IMR-90 (cell line): ENCODE measurements at regions of chr2 and their contacts with region 1.

Region 1: DNA sequence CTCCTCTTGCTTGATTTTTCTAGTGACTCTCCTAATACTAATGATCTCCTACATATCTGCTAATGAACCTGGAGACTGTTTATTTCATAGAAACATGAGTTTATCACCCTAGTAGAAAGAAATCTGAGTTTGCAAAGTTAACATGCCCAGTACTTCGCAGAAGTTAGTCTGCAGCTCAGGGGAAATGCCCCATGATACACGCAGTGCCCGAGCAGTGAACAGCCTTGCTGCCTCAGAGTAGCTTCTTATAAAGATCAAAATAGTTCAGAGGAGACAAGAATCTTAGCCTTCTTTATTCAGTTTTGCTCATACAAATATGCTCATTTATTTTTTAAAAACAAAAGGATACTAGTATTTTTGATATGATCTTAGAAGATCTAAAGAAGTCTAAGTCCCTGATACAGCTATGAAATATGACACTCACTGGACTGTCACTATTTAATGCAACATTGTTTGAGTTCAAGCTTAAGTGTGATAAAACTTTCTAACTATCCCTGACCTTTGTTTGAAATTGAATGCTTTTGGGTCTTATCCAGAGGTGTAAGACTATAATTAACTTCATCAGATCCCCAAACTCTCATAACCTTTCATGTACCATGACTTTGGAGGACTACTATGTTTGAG is 20.5 kb downstream of the FRZB start:
- DNase-seq: no peak
- ATAC-seq: peak; percentile 48; the same call in 1 of the 2 replicates
- H3K4me3 ChIP-seq: no peak overlapping the region
- H3K27ac ChIP-seq: no peak overlapping the region
- H3K4me1 ChIP-seq: no peaks in the 10 kb centered on the region
- H3K27me3 ChIP-seq: no peaks in the 10 kb centered on the region; the same call in 1 of the 2 replicates
- CTCF ChIP-seq: no peak
- POLR2A ChIP-seq: no peak
- RAD21 ChIP-seq: no peak

Region 2: GRCh38 chr2:182522405-182522896 is 323.5 kb before region 1 on chr2:
- CTCF ChIA-PET with region 1: no interaction called
- POLR2A ChIA-PET with region 1: no interaction called
- dilution Hi-C with region 1: no loop called
- in situ Hi-C with region 1: no loop called
- intact Hi-C with region 1: no loop called
- DNase-seq: no peak
- ATAC-seq: peak; percentile 63
- H3K4me3 ChIP-seq: no peak overlapping the region
- H3K27ac ChIP-seq: no peak overlapping the region
- H3K4me1 ChIP-seq: peaks cover 3% of the 10 kb centered on the region; the same call in 1 of the 2 replicates
- H3K27me3 ChIP-seq: no peaks in the 10 kb centered on the region; the same call in 1 of the 2 replicates
- CTCF ChIP-seq: no peak
- POLR2A ChIP-seq: no peak
- RAD21 ChIP-seq: no peak

Region 3: DNA sequence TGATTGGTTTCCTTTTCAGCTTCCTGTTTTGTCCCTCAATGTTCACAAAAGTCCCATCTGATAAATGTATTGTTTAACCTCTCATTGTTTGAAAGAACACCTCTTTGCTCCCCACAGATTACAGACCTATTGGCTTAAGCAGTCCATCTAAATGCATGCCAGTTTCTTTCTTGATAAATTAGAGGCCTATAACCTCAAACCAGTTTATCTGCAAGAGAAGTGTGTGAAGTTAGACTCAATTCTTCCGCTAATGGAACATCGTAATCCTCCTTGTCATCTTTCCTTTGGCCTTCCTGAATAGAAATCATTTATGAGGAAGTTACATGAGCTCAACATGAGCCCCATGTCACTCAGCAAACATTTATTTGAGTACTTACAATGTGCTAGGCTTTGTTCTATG is 53.5 kb before region 1 on chr2:
- CTCF ChIA-PET with region 1: interaction called, 3 read pairs
- POLR2A ChIA-PET with region 1: no interaction called
- dilution Hi-C with region 1: no loop called
- in situ Hi-C with region 1: no loop called
- intact Hi-C with region 1: loop called (anchors 1 kb)
- DNase-seq: no peak
- ATAC-seq: no peak
- H3K4me3 ChIP-seq: no peak overlapping the region
- H3K27ac ChIP-seq: no peak overlapping the region
- H3K4me1 ChIP-seq: no peaks in the 10 kb centered on the region
- H3K27me3 ChIP-seq: 0 out of 2 replicates have a peak, but pooled peaks cover 2% of the 10 kb centered on the region
- CTCF ChIP-seq: no peak
- POLR2A ChIP-seq: no peak
- RAD21 ChIP-seq: no peak

Region 4: GRCh38 chr2:182941919-182942318 is 96.0 kb after region 1 on chr2:
- CTCF ChIA-PET with region 1: no interaction called
- POLR2A ChIA-PET with region 1: no interaction called
- dilution Hi-C with region 1: no loop called
- in situ Hi-C with region 1: no loop called
- intact Hi-C with region 1: no loop called
- DNase-seq: peak; percentile 70
- ATAC-seq: peak; percentile 87
- H3K4me3 ChIP-seq: no peak overlapping the region
- H3K27ac ChIP-seq: peak overlapping the region; percentile 56; the same call in 1 of the 2 replicates
- H3K4me1 ChIP-seq: peaks cover 2% of the 10 kb centered on the region
- H3K27me3 ChIP-seq: no peaks in the 10 kb centered on the region
- CTCF ChIP-seq: no peak
- POLR2A ChIP-seq: no peak
- RAD21 ChIP-seq: no peak